Heart right ventricle (tissue), 16 donors: ENCODE measurements at regions of chr7 and their contacts with region 1.

Region 1: GRCh38 chr7:6272481-6273323 is at the start of gene CYTH3:
- DNase-seq: peak; percentile 70 to 86
- ATAC-seq: peak; percentile 88 to 97 (median 94)
- H3K4me3 ChIP-seq: peak within 1 kb of the TSS; percentile 80 to 99 (median 94)
- H3K27ac ChIP-seq: peak within 1 kb of the TSS; percentile 84 to 93 (median 90)
- H3K4me1 ChIP-seq: peaks cover 0 to 40% (median 34%) of the 10 kb centered on the region in 9 donors
- H3K27me3 ChIP-seq: peaks cover 0 to 12% (median 0%) of the 10 kb centered on the region in 7 donors
- CTCF ChIP-seq: peak in 1 of 9 donors; percentile 9
- total RNA-seq, gene CYTH3: 16.2 to 27.9 (median 23.2) TPM

Region 2: GRCh38 chr7:6175645-6176044 is 97.1 kb before region 1 on chr7:
- intact Hi-C with region 1: loop called in 2 of 10 experiments (anchors 5 kb)
- DNase-seq: no peak
- ATAC-seq: no peak
- H3K4me3 ChIP-seq: no peak overlapping the region
- H3K27ac ChIP-seq: peak overlapping the region in 4 of 10 donors; percentile 26 to 41 (median 32)
- H3K4me1 ChIP-seq: peaks cover 13 to 80% (median 44%) of the 10 kb centered on the region in 9 donors
- H3K27me3 ChIP-seq: no peaks in the 10 kb centered on the region
- CTCF ChIP-seq: no peak

Region 3: GRCh38 chr7:6228361-6229229 is 44.1 kb before region 1 on chr7:
- intact Hi-C with region 1: loop called in 4 of 10 experiments (anchors 2 to 5 kb)
- DNase-seq: peak in 1 of 2 donors; percentile 48
- ATAC-seq: peak; percentile 62 to 78 (median 72)
- H3K4me3 ChIP-seq: peak overlapping the region in 7 of 10 donors; percentile 3 to 33 (median 19)
- H3K27ac ChIP-seq: peak overlapping the region; percentile 39 to 83 (median 70)
- H3K4me1 ChIP-seq: peaks cover 21 to 100% (median 87%) of the 10 kb centered on the region in 9 donors
- H3K27me3 ChIP-seq: no peaks in the 10 kb centered on the region
- CTCF ChIP-seq: no peak

Region 4: GRCh38 chr7:6317797-6318438 is 45.2 kb after region 1 on chr7:
- intact Hi-C with region 1: loop called in 6 of 10 experiments (anchors 5 kb)
- DNase-seq: peak; percentile 52 to 79
- ATAC-seq: peak; percentile 85 to 96 (median 94)
- H3K4me3 ChIP-seq: peak overlapping the region in 8 of 10 donors; percentile 5 to 40 (median 22)
- H3K27ac ChIP-seq: peak overlapping the region; percentile 4 to 85 (median 73)
- H3K4me1 ChIP-seq: peaks cover 3 to 32% (median 18%) of the 10 kb centered on the region in 9 donors
- H3K27me3 ChIP-seq: no peaks in the 10 kb centered on the region
- CTCF ChIP-seq: no peak

Region 5: GRCh38 chr7:6323967-6324701 is 51.4 kb after region 1 on chr7:
- intact Hi-C with region 1: loop called in 6 of 10 experiments (anchors 5 kb)
- DNase-seq: no peak
- ATAC-seq: no peak
- H3K4me3 ChIP-seq: no peak overlapping the region
- H3K27ac ChIP-seq: no peak overlapping the region
- H3K4me1 ChIP-seq: peaks cover 0 to 9% (median 0%) of the 10 kb centered on the region in 9 donors
- H3K27me3 ChIP-seq: no peaks in the 10 kb centered on the region
- CTCF ChIP-seq: no peak